Naive thymus-derived CD4-positive, alpha-beta T cell (primary cell): ENCODE measurements at regions of chr1 and their contacts with region 1.

Region 1: DNA sequence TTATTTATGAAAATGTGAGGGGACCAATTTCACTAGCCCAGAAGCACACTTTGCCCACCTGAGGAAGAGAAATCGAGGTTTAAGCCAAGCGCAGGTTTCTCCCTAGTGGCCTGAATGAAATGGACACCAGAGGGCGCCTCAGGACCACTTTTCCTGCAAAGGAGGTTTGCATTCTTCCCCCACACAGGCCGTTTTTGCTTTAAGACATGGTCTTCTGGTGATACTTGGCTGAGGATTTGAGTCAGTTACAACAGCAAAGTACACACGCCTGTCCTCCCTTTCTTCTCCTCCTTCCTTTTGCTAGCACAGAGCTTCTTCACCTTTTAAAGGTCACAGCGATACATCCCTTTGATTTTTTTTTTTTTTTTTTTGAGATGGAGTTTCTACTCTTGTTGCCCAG is 5.4 kb downstream of the PLA2G2E start:
- DNase-seq: peak; percentile 49 to 81 (median 73)
- ATAC-seq: peak; percentile 75
- H3K4me3 ChIP-seq: no peak overlapping the region
- H3K4me3 Mint-ChIP-seq: peak overlapping the region in 1 of 10 donors; percentile 42
- H3K27ac ChIP-seq: no peak overlapping the region
- H3K27ac Mint-ChIP-seq: no peak overlapping the region
- H3K4me1 ChIP-seq: no peaks in the 10 kb centered on the region
- H3K4me1 Mint-ChIP-seq: peaks cover 0 to 5% (median 0%) of the 10 kb centered on the region in 7 donors
- H3K27me3 ChIP-seq: no peaks in the 10 kb centered on the region
- H3K27me3 Mint-ChIP-seq: peaks cover 0 to 6% (median 0%) of the 10 kb centered on the region in 5 donors

Region 2: GRCh38 chr1:19765623-19766022 is 152.4 kb before region 1 on chr1:
- CTCF ChIA-PET with region 1: no interaction called
- POLR2A ChIA-PET with region 1: no interaction called
- intact Hi-C with region 1: no loop called
- DNase-seq: peak in 1 of 9 donors; percentile 35
- ATAC-seq: no peak
- H3K4me3 ChIP-seq: no peak overlapping the region
- H3K4me3 Mint-ChIP-seq: peak overlapping the region in 1 of 10 donors; percentile 5
- H3K27ac ChIP-seq: no peak overlapping the region
- H3K27ac Mint-ChIP-seq: peak overlapping the region in 3 of 9 donors; percentile 1 to 28 (median 20)
- H3K4me1 ChIP-seq: no peaks in the 10 kb centered on the region
- H3K4me1 Mint-ChIP-seq: peaks cover 0 to 16% (median 0%) of the 10 kb centered on the region in 7 donors
- H3K27me3 ChIP-seq: no peaks in the 10 kb centered on the region
- H3K27me3 Mint-ChIP-seq: no peaks in the 10 kb centered on the region

Region 3: DNA sequence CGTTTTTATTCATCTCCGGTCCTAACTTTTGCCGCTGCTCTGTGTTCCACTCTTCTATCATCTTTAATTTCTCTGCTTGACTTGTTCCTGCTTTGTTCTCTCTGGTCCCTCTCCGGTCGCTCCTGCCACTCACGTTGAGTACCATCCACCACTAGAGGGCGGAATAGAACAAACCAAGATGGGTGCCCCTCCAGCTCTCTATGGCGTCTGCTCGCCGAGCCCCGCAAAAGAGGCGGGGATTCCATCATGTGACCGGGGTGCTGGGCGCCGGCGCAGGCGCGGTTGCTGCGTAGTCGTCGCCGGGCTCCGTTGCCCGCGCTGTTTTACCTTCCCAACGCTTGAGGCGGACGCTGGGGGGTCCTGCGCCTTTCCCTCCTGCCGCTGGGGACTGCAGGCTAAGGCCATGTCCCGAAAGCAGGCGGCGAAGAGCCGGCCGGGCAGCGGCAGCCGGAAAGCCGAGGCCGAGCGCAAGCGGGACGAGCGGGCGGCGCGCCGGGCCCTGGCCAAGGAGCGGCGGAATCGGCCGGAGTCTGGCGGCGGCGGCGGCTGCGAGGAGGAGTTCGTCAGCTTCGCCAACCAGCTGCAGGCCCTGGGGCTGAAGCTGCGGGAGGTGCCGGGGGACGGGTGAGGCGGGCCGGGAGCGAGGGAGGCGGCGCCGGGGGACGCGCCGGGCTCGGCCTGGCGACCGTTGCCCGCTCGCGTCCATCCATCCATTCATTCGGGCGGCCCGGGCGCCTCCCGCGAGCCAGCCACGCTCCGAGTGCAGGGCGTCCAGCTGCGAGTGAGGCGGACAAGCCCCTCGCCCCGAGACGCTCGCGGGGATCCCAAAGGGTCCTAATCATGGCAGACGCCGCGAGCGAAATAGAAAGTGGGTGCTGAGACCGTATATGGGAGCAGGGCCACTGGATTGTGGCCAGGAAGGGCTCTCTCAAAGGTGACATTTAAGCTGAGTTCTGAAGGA is 35.7 kb before region 1 on chr1 and contains the start of gene OTUD3:
- CTCF ChIA-PET with region 1: no interaction called
- POLR2A ChIA-PET with region 1: no interaction called
- intact Hi-C with region 1: no loop called
- DNase-seq: peak; percentile 87 to 97 (median 96)
- ATAC-seq: peak; percentile 100
- H3K4me3 ChIP-seq: peak within 1 kb of the TSS; percentile 66
- H3K4me3 Mint-ChIP-seq: peak within 1 kb of the TSS; percentile 77 to 95 (median 88)
- H3K27ac ChIP-seq: peak within 1 kb of the TSS; percentile 82
- H3K27ac Mint-ChIP-seq: peak within 1 kb of the TSS; percentile 3 to 88 (median 75)
- H3K4me1 ChIP-seq: peaks cover 15 to 23% of the 10 kb centered on the region in 2 donors
- H3K4me1 Mint-ChIP-seq: peaks cover 20 to 50% (median 47%) of the 10 kb centered on the region in 7 donors
- H3K27me3 ChIP-seq: no peaks in the 10 kb centered on the region
- H3K27me3 Mint-ChIP-seq: peaks cover 0 to 15% (median 6%) of the 10 kb centered on the region in 5 donors
- total RNA-seq, gene OTUD3: 13.1 to 23.6 (median 20.8) TPM

Region 4: DNA sequence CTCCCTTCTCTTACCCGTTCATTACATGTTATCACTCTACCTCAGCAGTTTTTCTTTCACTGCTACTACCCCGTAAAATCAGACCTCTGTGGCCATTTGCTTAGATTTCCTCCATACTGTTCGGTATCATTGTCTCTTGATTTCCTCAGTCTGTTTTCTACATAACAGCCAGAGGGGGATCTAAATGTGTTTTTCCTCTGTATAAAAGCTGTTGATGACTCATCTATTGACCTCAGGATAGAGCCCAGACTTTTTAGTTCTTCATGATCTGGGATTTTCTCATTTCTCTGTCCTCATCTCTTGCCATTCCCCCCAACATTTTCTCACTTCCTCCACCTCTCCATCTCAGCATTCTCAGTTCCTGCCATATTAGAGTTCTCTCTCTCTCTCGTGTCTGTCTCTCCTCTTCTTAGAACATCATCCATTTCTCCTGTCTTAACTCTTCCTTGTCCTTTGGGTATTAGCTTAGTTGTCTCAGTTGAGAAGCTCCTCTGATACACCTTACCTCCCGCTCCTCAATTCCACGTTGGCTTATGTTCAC is 25.4 kb before region 1 on chr1:
- CTCF ChIA-PET with region 1: no interaction called
- POLR2A ChIA-PET with region 1: no interaction called
- intact Hi-C with region 1: no loop called
- DNase-seq: no peak
- ATAC-seq: no peak
- H3K4me3 ChIP-seq: no peak overlapping the region
- H3K4me3 Mint-ChIP-seq: no peak overlapping the region
- H3K27ac ChIP-seq: no peak overlapping the region
- H3K27ac Mint-ChIP-seq: peak overlapping the region in 2 of 9 donors; percentile 12 to 85
- H3K4me1 ChIP-seq: no peaks in the 10 kb centered on the region
- H3K4me1 Mint-ChIP-seq: peaks cover 11 to 33% (median 25%) of the 10 kb centered on the region in 7 donors
- H3K27me3 ChIP-seq: no peaks in the 10 kb centered on the region
- H3K27me3 Mint-ChIP-seq: no peaks in the 10 kb centered on the region

Region 5: GRCh38 chr1:20142001-20142710 is 224.1 kb after region 1 on chr1:
- CTCF ChIA-PET with region 1: interaction called, 3 read pairs
- POLR2A ChIA-PET with region 1: no interaction called
- intact Hi-C with region 1: loop called in 1 of 2 experiments (anchors 2 kb)
- DNase-seq: no peak
- ATAC-seq: no peak
- H3K4me3 ChIP-seq: no peak overlapping the region
- H3K4me3 Mint-ChIP-seq: no peak overlapping the region
- H3K27ac ChIP-seq: no peak overlapping the region
- H3K27ac Mint-ChIP-seq: peak overlapping the region in 1 of 9 donors; percentile 56
- H3K4me1 ChIP-seq: no peaks in the 10 kb centered on the region
- H3K4me1 Mint-ChIP-seq: no peaks in the 10 kb centered on the region
- H3K27me3 ChIP-seq: no peaks in the 10 kb centered on the region
- H3K27me3 Mint-ChIP-seq: peaks cover 4 to 12% (median 8%) of the 10 kb centered on the region in 5 donors

Region 6: GRCh38 chr1:20271498-20272400 is 353.7 kb after region 1 on chr1:
- CTCF ChIA-PET with region 1: no interaction called
- POLR2A ChIA-PET with region 1: no interaction called
- intact Hi-C with region 1: no loop called
- DNase-seq: no peak
- ATAC-seq: no peak
- H3K4me3 ChIP-seq: no peak overlapping the region
- H3K4me3 Mint-ChIP-seq: no peak overlapping the region
- H3K27ac ChIP-seq: no peak overlapping the region
- H3K27ac Mint-ChIP-seq: no peak overlapping the region
- H3K4me1 ChIP-seq: no peaks in the 10 kb centered on the region
- H3K4me1 Mint-ChIP-seq: no peaks in the 10 kb centered on the region
- H3K27me3 ChIP-seq: no peaks in the 10 kb centered on the region
- H3K27me3 Mint-ChIP-seq: peaks cover 10 to 43% (median 27%) of the 10 kb centered on the region in 5 donors

Region 7: DNA sequence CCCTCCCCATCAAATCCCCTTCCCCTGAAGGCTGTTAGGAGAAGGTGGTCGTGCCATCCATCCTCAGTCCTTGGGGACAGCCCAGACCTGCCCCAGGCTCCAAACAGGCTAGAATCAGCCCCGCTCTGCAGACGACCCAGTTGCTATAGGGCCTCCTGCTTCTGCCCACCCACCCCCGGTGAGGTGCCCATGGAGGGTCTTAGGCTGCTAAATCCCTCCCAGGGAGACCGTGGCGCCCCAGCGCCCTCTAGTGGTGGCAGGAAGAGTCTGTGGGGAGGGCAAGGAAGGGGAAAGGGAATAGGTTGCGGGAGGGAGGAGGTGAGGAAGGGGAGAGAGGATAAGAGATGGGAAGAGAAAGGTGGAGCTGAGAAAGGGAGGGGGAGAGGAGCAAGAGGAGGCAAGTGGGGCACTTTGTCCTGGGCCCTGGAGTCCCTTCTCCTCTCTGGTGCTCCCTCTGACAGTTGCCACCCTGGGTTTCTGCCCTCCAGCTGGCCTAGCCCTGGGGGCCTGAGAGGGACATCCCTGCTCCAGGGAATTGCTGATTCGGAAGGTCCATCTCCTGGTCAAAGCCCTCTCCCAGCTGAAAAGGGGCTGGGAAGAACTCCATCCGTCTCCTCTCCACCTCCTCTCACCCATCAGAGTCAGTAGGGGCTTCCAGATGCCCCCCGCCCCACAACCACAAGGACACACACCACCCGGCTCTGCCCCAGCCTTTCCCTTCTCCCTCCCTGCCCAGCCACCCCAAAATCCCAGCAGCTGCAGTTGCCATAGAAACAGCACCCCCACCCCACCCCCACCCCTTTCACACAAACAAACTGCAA is 512.5 kb after region 1 on chr1:
- CTCF ChIA-PET with region 1: no interaction called
- POLR2A ChIA-PET with region 1: no interaction called
- intact Hi-C with region 1: loop called in 1 of 2 experiments (anchors 5 kb)
- DNase-seq: peak in 7 of 9 donors; percentile 7 to 54 (median 23)
- ATAC-seq: no peak
- H3K4me3 ChIP-seq: no peak overlapping the region
- H3K4me3 Mint-ChIP-seq: no peak overlapping the region
- H3K27ac ChIP-seq: no peak overlapping the region
- H3K27ac Mint-ChIP-seq: no peak overlapping the region
- H3K4me1 ChIP-seq: no peaks in the 10 kb centered on the region
- H3K4me1 Mint-ChIP-seq: peaks cover 0 to 13% (median 0%) of the 10 kb centered on the region in 7 donors
- H3K27me3 ChIP-seq: no peaks in the 10 kb centered on the region
- H3K27me3 Mint-ChIP-seq: peaks cover 32 to 53% (median 50%) of the 10 kb centered on the region in 5 donors